Endothelial cell of umbilical vein (primary cell): ENCODE measurements at regions of chr5 and their contacts with region 1.

Region 1: GRCh38 chr5:72366324-72366976 is 46.3 kb downstream of the PTCD2 start:
- DNase-seq: peak; percentile 87
- H3K4me3 ChIP-seq: no peak overlapping the region
- H3K27ac ChIP-seq: peak overlapping the region; percentile 23
- H3K4me1 ChIP-seq: peaks cover 23% of the 10 kb centered on the region
- H3K27me3 ChIP-seq: no peaks in the 10 kb centered on the region
- CTCF ChIP-seq: peak; percentile 66 to 76
- POLR2A ChIP-seq: no peak

Region 2: DNA sequence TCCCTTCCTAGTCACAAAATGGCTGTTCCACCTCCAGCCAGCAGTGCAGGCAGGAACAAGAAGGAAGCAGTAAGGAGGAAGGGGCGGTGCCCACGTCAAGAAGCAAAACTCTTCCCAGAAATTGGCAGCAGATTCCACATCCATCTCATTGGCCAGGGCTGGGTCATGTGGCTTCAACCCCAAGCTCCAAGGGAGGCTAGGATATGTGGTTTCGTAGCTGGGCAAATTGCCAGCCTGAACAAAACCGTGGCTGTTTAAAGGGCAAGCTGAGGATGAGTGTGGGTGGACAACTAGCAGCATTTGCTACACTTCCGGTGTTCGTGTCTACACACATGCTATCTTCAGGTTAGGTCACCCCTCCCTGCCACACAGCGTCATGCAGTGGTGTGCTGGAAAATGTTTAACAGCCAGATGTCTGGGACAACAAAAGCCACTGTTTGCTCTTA is 351.3 kb before region 1 on chr5:
- CTCF ChIA-PET with region 1: no interaction called
- POLR2A ChIA-PET with region 1: no interaction called
- dilution Hi-C with region 1: no loop called
- intact Hi-C with region 1: no loop called
- DNase-seq: no peak
- H3K4me3 ChIP-seq: no peak overlapping the region
- H3K27ac ChIP-seq: no peak overlapping the region
- H3K4me1 ChIP-seq: no peaks in the 10 kb centered on the region
- H3K27me3 ChIP-seq: peaks cover 14 to 34% of the 10 kb centered on the region in 2 experiments
- CTCF ChIP-seq: no peak
- POLR2A ChIP-seq: no peak

Region 3: DNA sequence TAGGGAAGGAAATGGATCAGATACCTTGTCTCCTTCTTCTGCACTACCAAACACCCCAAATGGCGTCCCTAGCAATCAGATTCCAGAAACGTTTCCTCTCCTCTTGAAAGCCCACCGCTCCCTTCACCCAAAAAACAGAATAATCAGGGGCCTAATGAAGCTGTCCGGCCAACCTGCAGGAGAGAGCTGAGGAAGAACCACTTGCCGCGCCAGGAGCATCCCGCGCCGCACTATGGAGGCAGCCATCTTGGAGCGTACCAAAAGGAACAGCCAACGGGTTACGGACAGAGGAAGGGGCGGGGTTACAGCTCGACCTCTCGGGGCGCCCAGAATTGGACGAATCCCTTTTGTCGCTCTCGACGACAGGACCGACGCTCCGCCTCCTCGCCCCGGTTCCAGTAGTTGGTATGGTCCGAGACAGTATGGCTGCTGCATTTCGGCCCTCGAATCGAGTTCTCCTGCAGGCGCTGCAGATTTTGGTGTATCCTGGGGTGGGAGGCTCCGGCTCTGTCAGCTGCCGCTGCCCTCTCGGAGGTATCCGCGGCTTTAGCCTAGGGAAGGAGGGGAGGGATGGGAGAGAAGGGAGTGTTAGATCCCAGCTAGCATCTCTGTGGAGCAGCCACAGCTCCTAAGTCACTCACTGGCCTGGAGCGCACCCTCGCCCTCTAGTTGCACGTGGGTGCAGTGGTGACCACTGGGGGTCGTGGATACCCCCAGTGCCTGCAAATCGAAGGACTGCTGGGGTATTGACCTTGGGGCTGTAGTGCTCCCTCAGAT is 46.3 kb before region 1 on chr5 and contains the starts of genes MRPS27 and PTCD2:
- CTCF ChIA-PET with region 1: interaction called, 4 read pairs
- POLR2A ChIA-PET with region 1: interaction called, 4 read pairs
- dilution Hi-C with region 1: no loop called
- intact Hi-C with region 1: loop called (anchors 1 kb)
- DNase-seq: peak; percentile 98
- H3K4me3 ChIP-seq: peak within 1 kb of the TSS; percentile 49 to 80 (median 70)
- H3K27ac ChIP-seq: peak within 1 kb of the TSS; percentile 14
- H3K4me1 ChIP-seq: peaks cover 6% of the 10 kb centered on the region
- H3K27me3 ChIP-seq: no peaks in the 10 kb centered on the region
- CTCF ChIP-seq: peak; percentile 8 to 28
- POLR2A ChIP-seq: peak; percentile 97
- total RNA-seq, gene MRPS27: 58.0 and 67.1 TPM in 2 replicates
- total RNA-seq, gene PTCD2: 6.2 and 6.7 TPM in 2 replicates

Region 4: GRCh38 chr5:72387985-72388384 is 21.5 kb after region 1 on chr5:
- CTCF ChIA-PET with region 1: interaction called, 32 read pairs
- POLR2A ChIA-PET with region 1: no interaction called
- dilution Hi-C with region 1: no loop called
- intact Hi-C with region 1: loop called (anchors 1 kb)
- DNase-seq: peak; percentile 90
- H3K4me3 ChIP-seq: no peak overlapping the region
- H3K27ac ChIP-seq: peak overlapping the region; percentile 97
- H3K4me1 ChIP-seq: peaks cover 43% of the 10 kb centered on the region
- H3K27me3 ChIP-seq: no peaks in the 10 kb centered on the region
- CTCF ChIP-seq: no peak
- POLR2A ChIP-seq: no peak

Region 5: DNA sequence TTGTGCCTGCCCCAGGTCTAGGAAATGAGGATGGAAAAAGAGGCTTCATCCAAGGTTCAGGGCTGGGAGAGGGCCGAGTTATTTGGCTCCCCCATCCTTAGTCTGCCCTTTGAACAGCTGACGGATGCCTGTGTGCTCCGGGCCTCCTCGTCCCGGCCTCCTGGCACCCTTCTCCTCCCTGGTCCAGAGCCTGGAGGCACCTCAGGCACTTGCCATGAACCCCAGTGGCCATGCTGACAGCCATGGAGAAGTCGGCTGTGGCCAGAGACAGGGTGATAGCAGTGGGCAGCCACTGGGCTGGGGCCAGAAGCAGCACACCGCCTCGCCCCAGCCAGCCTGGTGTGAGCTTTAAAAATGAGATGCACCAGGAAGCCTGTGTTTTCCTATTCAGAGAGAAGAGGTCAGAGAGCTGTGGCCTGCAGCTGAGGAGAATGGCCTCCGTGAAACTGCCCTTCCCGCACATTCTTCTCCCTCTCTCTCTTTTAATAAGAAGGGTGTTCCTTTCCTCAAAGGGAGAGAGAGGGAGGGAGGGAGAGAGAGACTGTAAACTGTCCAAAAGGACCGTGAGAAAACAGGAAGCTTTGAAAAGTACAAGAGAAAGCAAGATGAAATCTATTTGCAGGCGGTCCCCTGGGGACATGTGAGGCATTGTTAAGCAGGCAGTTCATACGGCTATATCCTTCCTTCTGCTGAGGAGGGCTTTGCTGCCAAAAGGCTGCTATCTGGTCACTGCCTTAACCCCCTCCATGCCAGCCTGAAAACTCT is 85.5 kb after region 1 on chr5:
- CTCF ChIA-PET with region 1: interaction called, 45 read pairs
- POLR2A ChIA-PET with region 1: no interaction called
- dilution Hi-C with region 1: no loop called
- intact Hi-C with region 1: loop called (anchors 1 kb)
- DNase-seq: peak; percentile 98
- H3K4me3 ChIP-seq: no peak overlapping the region
- H3K27ac ChIP-seq: peak overlapping the region; percentile 100
- H3K4me1 ChIP-seq: peaks cover 49% of the 10 kb centered on the region
- H3K27me3 ChIP-seq: no peaks in the 10 kb centered on the region
- CTCF ChIP-seq: no peak
- POLR2A ChIP-seq: peak; percentile 48

Region 6: GRCh38 chr5:72537166-72537565 is 170.7 kb after region 1 on chr5:
- CTCF ChIA-PET with region 1: interaction called, 10 read pairs
- POLR2A ChIA-PET with region 1: no interaction called
- dilution Hi-C with region 1: no loop called
- intact Hi-C with region 1: no loop called
- DNase-seq: no peak
- H3K4me3 ChIP-seq: no peak overlapping the region
- H3K27ac ChIP-seq: no peak overlapping the region
- H3K4me1 ChIP-seq: no peaks in the 10 kb centered on the region
- H3K27me3 ChIP-seq: no peaks in the 10 kb centered on the region
- CTCF ChIP-seq: no peak
- POLR2A ChIP-seq: no peak

Region 7: DNA sequence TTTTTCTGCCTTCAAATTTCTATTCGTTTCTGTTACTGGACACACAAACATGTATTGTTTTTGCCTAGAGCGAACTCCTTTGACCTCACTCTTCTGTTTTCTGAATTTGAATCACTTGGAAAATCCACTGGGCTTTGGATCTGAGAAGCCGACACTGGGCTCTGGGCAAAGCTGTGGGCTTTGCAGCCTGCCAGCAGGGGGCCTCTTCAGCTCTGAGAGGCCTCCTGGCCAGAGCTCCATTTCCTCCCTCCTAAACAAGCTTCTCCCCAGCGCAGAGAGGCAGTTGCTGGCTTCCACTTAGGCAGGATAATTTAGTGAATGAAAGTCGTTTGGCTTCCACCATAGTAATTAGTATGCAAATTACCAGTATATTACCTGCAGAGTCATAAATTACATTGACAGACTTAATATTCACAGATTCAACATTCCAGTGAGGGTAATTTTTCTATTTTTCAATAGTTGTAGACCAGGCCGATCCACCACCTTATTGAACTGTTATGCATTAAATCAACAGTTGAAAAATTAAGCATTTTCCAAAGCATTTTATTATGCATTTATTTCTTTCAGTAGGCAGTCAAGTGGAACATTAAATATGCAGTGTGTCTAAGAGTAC is 244.8 kb after region 1 on chr5:
- CTCF ChIA-PET with region 1: interaction called, 24 read pairs
- POLR2A ChIA-PET with region 1: no interaction called
- dilution Hi-C with region 1: no loop called
- intact Hi-C with region 1: no loop called
- DNase-seq: peak; percentile 85
- H3K4me3 ChIP-seq: no peak overlapping the region
- H3K27ac ChIP-seq: peak overlapping the region; percentile 23
- H3K4me1 ChIP-seq: peaks cover 5% of the 10 kb centered on the region
- H3K27me3 ChIP-seq: no peaks in the 10 kb centered on the region
- CTCF ChIP-seq: peak; percentile 98
- POLR2A ChIP-seq: no peak

Region 8: GRCh38 chr5:73170522-73170921 is 804.1 kb after region 1 on chr5:
- CTCF ChIA-PET with region 1: no interaction called
- POLR2A ChIA-PET with region 1: no interaction called
- dilution Hi-C with region 1: no loop called
- intact Hi-C with region 1: no loop called
- DNase-seq: peak; percentile 62
- H3K4me3 ChIP-seq: no peak overlapping the region
- H3K27ac ChIP-seq: no peak overlapping the region
- H3K4me1 ChIP-seq: no peaks in the 10 kb centered on the region
- H3K27me3 ChIP-seq: peaks cover 21 to 41% of the 10 kb centered on the region in 2 experiments
- CTCF ChIP-seq: peak; percentile 75 to 79
- POLR2A ChIP-seq: no peak